ENCODE measurements at regions of chr5 and their contacts with region 1.

Region 1: DNA sequence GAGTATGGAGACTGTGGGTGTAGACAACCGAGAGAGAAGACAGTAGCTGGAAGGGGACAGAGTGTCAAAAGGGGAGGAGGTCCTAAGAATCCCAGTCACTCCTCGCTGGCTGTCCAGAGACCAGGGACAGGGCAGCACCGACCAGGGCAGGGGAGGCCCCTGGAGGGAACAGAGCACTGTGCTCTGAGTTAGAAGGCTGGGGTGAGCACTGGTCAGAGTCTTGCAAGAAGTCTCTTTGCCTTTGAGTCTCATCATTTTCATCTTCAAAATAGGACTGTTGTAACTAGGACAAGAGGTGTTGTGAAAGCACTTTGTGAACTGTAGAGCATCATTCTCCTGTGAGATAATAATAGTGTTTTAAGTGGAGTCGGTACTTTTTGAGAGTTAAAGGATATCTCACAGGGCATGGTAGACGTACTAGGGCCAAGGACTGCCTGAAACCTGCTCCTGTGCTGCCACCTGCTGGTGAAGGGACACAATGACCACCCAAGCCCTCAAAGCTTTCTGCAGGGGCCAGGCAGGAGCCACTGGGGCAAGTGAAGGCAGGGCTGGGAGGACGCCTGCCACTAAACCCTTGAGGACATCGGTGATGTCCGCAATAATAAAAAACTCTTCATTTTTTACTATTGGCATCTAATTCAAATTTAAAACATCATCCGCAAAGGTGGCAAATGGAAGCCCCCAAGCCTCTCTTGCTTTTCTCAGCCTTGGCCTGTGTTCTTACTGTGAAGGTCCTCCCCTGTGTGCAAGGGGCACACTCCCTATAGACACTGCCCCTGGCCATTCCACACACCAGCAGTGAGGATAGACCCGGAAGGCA is 28.2 kb downstream of the SLC6A7 start:
- DNase-seq: peak; percentile 92
- H3K4me3 ChIP-seq: no peak overlapping the region
- H3K27ac ChIP-seq: no peak overlapping the region
- H3K4me1 ChIP-seq: peaks cover 0 to 7% (median 2%) of the 10 kb centered on the region in 4 donors
- H3K27me3 ChIP-seq: peaks cover 0 to 3% (median 0%) of the 10 kb centered on the region in 3 donors
- CTCF ChIP-seq: peak; percentile 71 to 98 (median 93)
- EP300 ChIP-seq: no peak
- POLR2A ChIP-seq: no peak

Region 2: GRCh38 chr5:149860801-149861322 is 357.2 kb before region 1 on chr5:
- intact Hi-C with region 1: no loop called
- DNase-seq: peak; percentile 53
- H3K4me3 ChIP-seq: no peak overlapping the region
- H3K27ac ChIP-seq: no peak overlapping the region
- H3K4me1 ChIP-seq: peaks cover 0 to 17% (median 15%) of the 10 kb centered on the region in 4 donors
- H3K27me3 ChIP-seq: no peaks in the 10 kb centered on the region
- CTCF ChIP-seq: no peak
- EP300 ChIP-seq: no peak
- POLR2A ChIP-seq: no peak

Region 3: GRCh38 chr5:150000256-150000989 is 217.7 kb before region 1 on chr5 and contains the starts of genes HMGXB3 and TIGD6:
- intact Hi-C with region 1: loop called (anchors 10 kb)
- DNase-seq: peak; percentile 97
- H3K4me3 ChIP-seq: peak within 1 kb of the TSS; percentile 87 to 99 (median 98)
- H3K27ac ChIP-seq: peak within 1 kb of the TSS; percentile 92 to 97 (median 95)
- H3K4me1 ChIP-seq: peaks cover 0 to 43% (median 28%) of the 10 kb centered on the region in 4 donors
- H3K27me3 ChIP-seq: no peaks in the 10 kb centered on the region
- CTCF ChIP-seq: no peak
- EP300 ChIP-seq: peak in 1 of 4 donors; percentile 85
- POLR2A ChIP-seq: peak; percentile 57 to 59
- total RNA-seq, gene HMGXB3: 13.9 to 28.8 (median 21.0) TPM
- total RNA-seq, gene TIGD6: 1.6 to 11.4 (median 3.8) TPM

Region 4: DNA sequence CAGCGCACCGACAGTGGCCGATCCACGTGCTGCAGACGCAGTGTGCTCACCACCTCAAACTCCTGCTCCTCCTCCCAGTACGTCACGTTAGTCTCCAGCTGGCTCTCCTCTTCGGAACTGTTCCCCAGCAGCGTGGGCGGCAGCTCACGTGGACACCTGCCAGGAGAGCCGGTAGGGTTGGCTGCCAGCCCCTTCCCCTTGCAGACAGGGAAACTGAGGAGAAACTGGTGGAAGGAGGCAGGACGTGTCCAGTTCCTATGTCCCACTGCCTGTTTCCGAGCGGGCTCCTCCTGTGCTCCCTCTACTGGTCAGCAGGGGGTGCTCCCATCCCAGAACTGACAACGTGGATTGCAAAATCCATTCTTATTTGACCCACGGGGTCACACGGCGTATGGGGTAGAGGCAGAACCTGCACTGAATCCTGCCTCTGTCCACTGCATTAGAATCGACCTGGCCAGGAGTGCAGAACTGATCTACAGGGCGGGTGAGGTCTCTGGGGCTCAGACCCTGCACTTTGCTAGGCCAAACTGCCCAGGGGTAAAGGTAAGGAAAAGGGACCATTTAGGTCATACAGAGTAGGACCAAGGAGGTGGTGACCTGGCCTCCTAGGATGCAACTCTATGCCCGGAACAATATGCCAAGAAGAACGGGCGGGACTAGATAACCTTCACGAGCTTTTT is 88.1 kb before region 1 on chr5:
- intact Hi-C with region 1: loop called (anchors 1 kb)
- DNase-seq: peak; percentile 91
- H3K4me3 ChIP-seq: no peak overlapping the region
- H3K27ac ChIP-seq: peak overlapping the region in 3 of 4 donors; percentile 21 to 67 (median 29)
- H3K4me1 ChIP-seq: peaks cover 0 to 37% (median 33%) of the 10 kb centered on the region in 4 donors
- H3K27me3 ChIP-seq: no peaks in the 10 kb centered on the region
- CTCF ChIP-seq: peak; percentile 91 to 95 (median 92)
- EP300 ChIP-seq: no peak
- POLR2A ChIP-seq: no peak

Region 5: GRCh38 chr5:150161242-150162141 is 56.6 kb before region 1 on chr5:
- intact Hi-C with region 1: loop called (anchors 1 kb)
- DNase-seq: peak; percentile 89
- H3K4me3 ChIP-seq: no peak overlapping the region
- H3K27ac ChIP-seq: peak overlapping the region in 3 of 4 donors; percentile 85 to 92 (median 89)
- H3K4me1 ChIP-seq: peaks cover 0 to 19% (median 3%) of the 10 kb centered on the region in 4 donors
- H3K27me3 ChIP-seq: peaks cover 0 to 4% (median under 1%) of the 10 kb centered on the region in 3 donors
- CTCF ChIP-seq: peak; percentile 71 to 95 (median 92)
- EP300 ChIP-seq: no peak
- POLR2A ChIP-seq: no peak

Region 6: DNA sequence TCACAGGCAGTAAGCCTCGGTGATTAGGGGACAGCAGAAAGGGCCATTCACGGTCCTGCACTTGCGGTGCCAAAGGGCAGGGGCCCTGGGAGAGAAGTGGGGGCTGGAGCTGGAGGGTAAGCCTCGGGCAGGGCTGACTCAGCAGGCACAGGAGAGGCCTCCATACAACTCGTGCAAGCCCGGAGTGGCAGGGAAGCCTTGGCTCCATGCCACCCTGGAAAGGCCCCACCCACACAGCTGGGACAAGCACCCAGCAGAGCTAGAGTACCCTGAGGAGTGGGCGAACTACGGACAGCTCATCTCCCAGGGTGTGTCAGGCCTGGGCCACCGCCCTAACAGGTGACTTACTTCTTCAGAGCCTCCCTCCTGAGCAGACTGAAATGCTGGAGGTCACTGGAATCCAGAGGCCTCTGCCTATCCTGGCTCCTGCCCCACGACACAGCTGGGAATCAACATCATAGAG is 77.1 kb after region 1 on chr5:
- intact Hi-C with region 1: no loop called
- DNase-seq: peak; percentile 73
- H3K4me3 ChIP-seq: no peak overlapping the region
- H3K27ac ChIP-seq: peak overlapping the region in 2 of 4 donors; percentile 33 to 41
- H3K4me1 ChIP-seq: peaks cover 0 to 32% (median 26%) of the 10 kb centered on the region in 4 donors
- H3K27me3 ChIP-seq: no peaks in the 10 kb centered on the region
- CTCF ChIP-seq: no peak
- EP300 ChIP-seq: no peak
- POLR2A ChIP-seq: no peak

Region 7: GRCh38 chr5:150320048-150320555 is 102.0 kb after region 1 on chr5:
- intact Hi-C with region 1: no loop called
- DNase-seq: peak; percentile 95
- H3K4me3 ChIP-seq: no peak overlapping the region
- H3K27ac ChIP-seq: peak overlapping the region; percentile 10 to 49 (median 29)
- H3K4me1 ChIP-seq: peaks cover 0 to 17% (median 7%) of the 10 kb centered on the region in 4 donors
- H3K27me3 ChIP-seq: no peaks in the 10 kb centered on the region
- CTCF ChIP-seq: no peak
- EP300 ChIP-seq: no peak
- POLR2A ChIP-seq: no peak

Region 8: GRCh38 chr5:150436141-150436680 is 218.1 kb after region 1 on chr5:
- intact Hi-C with region 1: loop called (anchors 10 kb)
- DNase-seq: peak; percentile 94
- H3K4me3 ChIP-seq: no peak overlapping the region
- H3K27ac ChIP-seq: no peak overlapping the region
- H3K4me1 ChIP-seq: peaks cover 0 to 7% (median 0%) of the 10 kb centered on the region in 4 donors
- H3K27me3 ChIP-seq: no peaks in the 10 kb centered on the region
- CTCF ChIP-seq: peak; percentile 70 to 86 (median 79)
- EP300 ChIP-seq: no peak
- POLR2A ChIP-seq: no peak

Region 9: DNA sequence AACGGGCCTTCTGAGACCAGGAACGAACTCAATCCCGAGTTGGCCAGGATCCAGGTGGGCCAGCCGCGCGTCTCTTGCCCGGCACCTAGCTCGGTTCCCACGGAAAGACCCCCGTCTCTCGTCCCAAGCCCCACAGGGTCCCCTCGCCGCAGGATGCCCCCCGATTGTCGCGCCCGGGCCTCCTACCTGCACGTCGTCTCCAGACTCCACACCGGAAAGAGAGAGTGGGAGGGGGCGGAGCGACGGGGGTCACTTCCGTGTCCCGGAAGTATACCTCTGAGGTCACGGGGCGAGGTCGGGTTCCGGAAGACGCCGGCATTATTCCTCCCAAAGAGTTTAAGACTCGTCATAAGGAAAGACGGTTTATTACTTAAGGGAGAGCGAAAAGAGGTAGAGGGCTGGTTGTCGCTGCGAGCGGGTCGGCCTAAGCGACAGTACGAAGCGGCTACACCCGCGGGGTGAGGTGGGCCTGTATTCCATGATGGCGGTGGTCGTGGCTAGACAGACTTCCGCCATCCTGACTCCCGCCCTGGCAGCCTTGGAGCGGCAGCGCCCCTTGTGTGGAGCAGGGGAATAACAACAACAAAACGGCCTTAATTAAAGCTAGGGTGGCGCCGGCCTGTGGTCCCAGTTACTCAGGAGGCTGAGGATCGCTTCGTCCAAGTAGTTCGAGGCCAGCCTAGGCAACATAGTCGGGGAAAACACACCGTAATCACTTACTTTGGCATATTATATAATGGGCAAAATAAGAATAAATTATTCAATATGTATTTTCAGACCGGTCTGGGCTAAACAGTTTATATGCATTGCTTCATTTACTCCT is 231.6 kb after region 1 on chr5 and contains the start of gene RPS14:
- intact Hi-C with region 1: no loop called
- DNase-seq: peak; percentile 97
- H3K4me3 ChIP-seq: peak within 1 kb of the TSS; percentile 71 to 85 (median 80)
- H3K27ac ChIP-seq: peak within 1 kb of the TSS; percentile 91 to 98 (median 94)
- H3K4me1 ChIP-seq: peaks cover 0 to 20% (median 18%) of the 10 kb centered on the region in 4 donors
- H3K27me3 ChIP-seq: no peaks in the 10 kb centered on the region
- CTCF ChIP-seq: peak; percentile 85 to 96 (median 92)
- EP300 ChIP-seq: no peak
- POLR2A ChIP-seq: peak; percentile 77 to 90
- total RNA-seq, gene RPS14: 3,111 to 5,491 (median 5,342) TPM